ENCODE measurements at regions of chr2 and their contacts with region 1.

Region 1: GRCh38 chr2:119753041-119753929 is 6.4 kb upstream of the PTPN4 start:
- DNase-seq: peak; percentile 67
- ATAC-seq: peak; percentile 78
- H3K4me3 ChIP-seq: no peak overlapping the region
- H3K4me3 Mint-ChIP-seq: no peak overlapping the region
- H3K27ac ChIP-seq: no peak overlapping the region
- H3K27ac Mint-ChIP-seq: no peak overlapping the region
- H3K4me1 ChIP-seq: no peaks in the 10 kb centered on the region
- H3K4me1 Mint-ChIP-seq: peaks cover 2% of the 10 kb centered on the region
- H3K27me3 ChIP-seq: no peaks in the 10 kb centered on the region
- H3K27me3 Mint-ChIP-seq: peaks cover 8% of the 10 kb centered on the region
- CTCF ChIP-seq: peak; percentile 73

Region 2: DNA sequence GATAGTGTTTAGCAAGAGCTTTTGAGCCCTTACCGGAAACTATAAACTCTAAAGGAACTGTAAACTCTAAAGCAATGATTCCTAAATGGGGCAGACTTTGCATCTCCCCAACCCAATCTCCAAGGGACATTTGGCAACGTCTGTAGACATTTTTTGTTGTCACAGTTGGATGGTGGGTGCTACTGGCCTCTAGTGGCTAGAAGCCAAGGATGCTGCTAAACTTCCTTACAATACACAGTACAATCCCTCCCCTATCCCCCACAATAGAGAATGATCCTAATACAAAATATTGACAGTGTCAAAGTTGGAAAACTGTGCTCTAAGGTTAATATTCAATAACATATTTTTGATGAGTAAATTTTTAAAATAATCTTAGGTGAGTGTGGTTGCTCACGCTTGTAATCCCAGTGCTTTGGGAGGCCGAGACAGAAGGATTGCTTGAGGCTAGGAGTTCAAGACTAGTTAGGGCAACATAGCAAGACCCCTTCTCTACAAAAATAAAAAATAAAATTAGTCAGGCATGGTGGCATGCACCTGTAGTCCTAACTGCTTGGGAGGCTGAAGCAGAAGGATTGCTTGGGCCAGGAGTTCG is 73.2 kb after region 1 on chr2:
- CTCF ChIA-PET with region 1: interaction called, 68 read pairs
- POLR2A ChIA-PET with region 1: no interaction called
- intact Hi-C with region 1: loop called (anchors 1 kb)
- DNase-seq: peak; percentile 40
- ATAC-seq: peak; percentile 53
- H3K4me3 ChIP-seq: no peak overlapping the region
- H3K4me3 Mint-ChIP-seq: no peak overlapping the region
- H3K27ac ChIP-seq: no peak overlapping the region
- H3K27ac Mint-ChIP-seq: no peak overlapping the region
- H3K4me1 ChIP-seq: no peaks in the 10 kb centered on the region
- H3K4me1 Mint-ChIP-seq: peaks cover 11% of the 10 kb centered on the region
- H3K27me3 ChIP-seq: no peaks in the 10 kb centered on the region
- H3K27me3 Mint-ChIP-seq: no peaks in the 10 kb centered on the region
- CTCF ChIP-seq: peak; percentile 56

Region 3: GRCh38 chr2:119947535-119947934 is 194.2 kb after region 1 on chr2:
- CTCF ChIA-PET with region 1: no interaction called
- POLR2A ChIA-PET with region 1: no interaction called
- intact Hi-C with region 1: loop called (anchors 5 kb)
- DNase-seq: no peak
- ATAC-seq: no peak
- H3K4me3 ChIP-seq: no peak overlapping the region
- H3K4me3 Mint-ChIP-seq: no peak overlapping the region
- H3K27ac ChIP-seq: no peak overlapping the region
- H3K27ac Mint-ChIP-seq: no peak overlapping the region
- H3K4me1 ChIP-seq: no peaks in the 10 kb centered on the region
- H3K4me1 Mint-ChIP-seq: peaks cover 2% of the 10 kb centered on the region
- H3K27me3 ChIP-seq: no peaks in the 10 kb centered on the region
- H3K27me3 Mint-ChIP-seq: no peaks in the 10 kb centered on the region
- CTCF ChIP-seq: no peak

Measured in B cell (primary cell).